Adrenal gland (tissue), 19 donors: ENCODE measurements at regions of chr16 and their contacts with region 1.

Region 1: GRCh38 chr16:24635900-24636610 is 93.4 kb upstream of the TNRC6A start:
- DNase-seq: peak; percentile 82 to 97 (median 94)
- H3K4me3 ChIP-seq: no peak overlapping the region
- H3K27ac ChIP-seq: peak overlapping the region in 2 of 5 donors; percentile 24 to 55
- H3K4me1 ChIP-seq: peaks cover 7 to 11% of the 10 kb centered on the region in 2 donors
- H3K27me3 ChIP-seq: no peaks in the 10 kb centered on the region
- CTCF ChIP-seq: no peak
- POLR2A ChIP-seq: no peak

Region 2: DNA sequence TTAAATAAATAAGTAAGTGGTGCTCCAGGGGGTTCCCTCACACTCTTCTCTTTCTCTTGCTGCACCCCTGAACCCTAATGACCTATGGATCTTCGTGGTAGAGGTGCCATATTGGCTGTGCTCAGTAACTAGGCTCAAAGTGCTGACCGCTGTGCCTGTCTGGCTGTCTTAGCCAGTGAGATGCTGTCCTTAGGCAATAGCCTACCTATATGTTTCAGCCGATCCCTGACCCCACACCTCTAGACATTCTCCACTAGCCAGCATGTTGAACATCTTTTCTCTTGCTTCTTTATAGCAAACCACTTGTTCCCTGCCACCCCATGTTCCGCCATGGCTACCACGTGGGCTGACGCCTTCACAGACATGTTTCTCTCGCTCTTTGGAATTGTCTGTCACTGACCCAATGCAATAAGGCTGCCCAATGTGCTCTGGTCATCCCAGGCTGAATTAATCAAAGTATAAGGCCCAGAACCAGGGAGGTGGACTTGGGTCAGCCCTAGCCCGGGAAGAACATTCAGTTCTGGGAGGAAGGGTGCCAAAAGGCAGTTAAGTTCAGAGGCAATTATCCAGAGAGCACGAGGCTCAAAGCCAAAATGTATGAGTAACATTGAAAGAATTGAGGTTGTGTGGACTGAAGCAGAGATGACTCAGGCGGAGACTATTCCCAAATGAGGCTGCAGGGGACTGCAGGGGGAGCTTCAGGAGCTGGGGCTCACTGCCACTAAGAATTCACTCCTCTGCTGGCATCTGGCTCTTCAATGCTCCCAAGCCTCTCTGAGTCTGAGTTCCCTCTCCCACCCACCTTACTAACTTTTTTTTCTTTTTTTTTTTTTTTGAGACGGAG is 64.7 kb after region 1 on chr16:
- intact Hi-C with region 1: loop called in 1 of 2 experiments (anchors 10 kb)
- DNase-seq: peak; percentile 80 to 94 (median 92)
- H3K4me3 ChIP-seq: peak overlapping the region in 1 of 4 donors; percentile 11
- H3K27ac ChIP-seq: peak overlapping the region; percentile 39 to 87 (median 67)
- H3K4me1 ChIP-seq: peaks cover 15 to 16% of the 10 kb centered on the region in 2 donors
- H3K27me3 ChIP-seq: no peaks in the 10 kb centered on the region
- CTCF ChIP-seq: peak in 5 of 6 experiments; percentile 40 to 60 (median 48)
- POLR2A ChIP-seq: peak in 1 of 2 donors; percentile 58